GM12878 (cell line): ENCODE measurements at regions of chr13 and their contacts with region 1.

Region 1: DNA sequence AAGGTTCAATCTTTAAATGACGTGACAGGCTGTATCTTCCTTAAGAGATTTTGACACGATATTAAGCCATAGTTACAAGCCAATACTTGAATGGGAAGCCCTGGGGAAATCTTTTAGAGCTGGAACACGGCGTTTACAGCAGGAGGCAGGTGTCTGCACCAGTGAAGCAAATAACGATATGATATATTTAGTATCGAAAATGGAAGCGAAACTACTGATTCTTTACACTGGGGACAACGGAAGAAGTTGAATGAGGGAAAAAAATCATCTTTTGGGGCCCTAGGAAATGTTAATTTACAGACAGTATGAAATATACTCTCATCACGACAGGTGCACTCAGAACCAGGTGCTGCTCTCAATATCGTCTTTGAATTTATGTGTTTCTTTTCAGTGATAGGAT is 793.9 kb upstream of the PCDH20 start:
- DNase-seq: peak; percentile 65
- ATAC-seq: peak; percentile 92
- H3K4me3 ChIP-seq: peak overlapping the region; percentile 43
- H3K27ac ChIP-seq: peak overlapping the region; percentile 84
- H3K4me1 ChIP-seq: peaks cover 10% of the 10 kb centered on the region
- H3K27me3 ChIP-seq: no peaks in the 10 kb centered on the region
- CTCF ChIP-seq: no peak
- EP300 ChIP-seq: peak; percentile 62 to 68; a peak in 2 of 4 replicates
- POLR2A ChIP-seq: no peak
- RAD21 ChIP-seq: peak; percentile 36; the same call in 1 of the 2 replicates

Region 2: GRCh38 chr13:61672756-61673155 is 536.8 kb before region 1 on chr13:
- CTCF ChIA-PET with region 1: no interaction called
- POLR2A ChIA-PET with region 1: no interaction called
- RAD21 ChIA-PET with region 1: no interaction called
- SMC1A ChIA-PET with region 1: no interaction called
- in situ Hi-C with region 1: no loop called
- intact Hi-C with region 1: no loop called
- DNase-seq: no peak
- ATAC-seq: no peak
- H3K4me3 ChIP-seq: no peak overlapping the region
- H3K27ac ChIP-seq: no peak overlapping the region
- H3K4me1 ChIP-seq: no peaks in the 10 kb centered on the region
- H3K27me3 ChIP-seq: no peaks in the 10 kb centered on the region
- CTCF ChIP-seq: no peak
- EP300 ChIP-seq: no peak
- POLR2A ChIP-seq: no peak
- RAD21 ChIP-seq: no peak

Region 3: DNA sequence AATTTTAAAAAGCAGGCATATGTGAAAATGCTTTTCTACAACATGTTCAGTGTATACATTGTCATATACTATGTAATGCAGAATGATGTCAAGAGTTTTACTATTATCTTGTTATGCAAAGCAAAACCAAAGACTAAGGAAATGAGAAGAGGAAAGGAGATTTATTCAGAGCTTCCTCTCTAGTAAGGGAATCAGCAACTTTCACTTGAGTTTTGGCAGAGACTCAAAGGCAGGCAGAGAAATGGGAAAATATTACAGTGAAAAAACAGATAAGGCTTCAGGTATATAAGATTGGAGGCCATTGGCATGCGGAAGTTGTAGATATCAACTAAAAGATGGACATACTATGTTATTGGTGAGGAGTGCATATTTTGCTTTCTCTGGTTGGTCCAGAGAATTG is 281.9 kb before region 1 on chr13:
- CTCF ChIA-PET with region 1: no interaction called
- POLR2A ChIA-PET with region 1: no interaction called
- RAD21 ChIA-PET with region 1: no interaction called
- SMC1A ChIA-PET with region 1: no interaction called
- in situ Hi-C with region 1: no loop called
- intact Hi-C with region 1: no loop called
- DNase-seq: no peak
- ATAC-seq: no peak
- H3K4me3 ChIP-seq: no peak overlapping the region
- H3K27ac ChIP-seq: no peak overlapping the region
- H3K4me1 ChIP-seq: no peaks in the 10 kb centered on the region
- H3K27me3 ChIP-seq: no peaks in the 10 kb centered on the region
- CTCF ChIP-seq: no peak
- EP300 ChIP-seq: no peak
- POLR2A ChIP-seq: no peak
- RAD21 ChIP-seq: no peak

Region 4: GRCh38 chr13:62193919-62194318 is 15.6 kb before region 1 on chr13:
- CTCF ChIA-PET with region 1: interaction called, 3 read pairs
- POLR2A ChIA-PET with region 1: interaction called, 4 read pairs
- RAD21 ChIA-PET with region 1: interaction called, 4 read pairs
- SMC1A ChIA-PET with region 1: interaction called, 18 read pairs
- in situ Hi-C with region 1: no loop called
- intact Hi-C with region 1: no loop called
- DNase-seq: no peak
- ATAC-seq: no peak
- H3K4me3 ChIP-seq: no peak overlapping the region
- H3K27ac ChIP-seq: no peak overlapping the region
- H3K4me1 ChIP-seq: no peaks in the 10 kb centered on the region
- H3K27me3 ChIP-seq: no peaks in the 10 kb centered on the region
- CTCF ChIP-seq: no peak
- EP300 ChIP-seq: no peak
- POLR2A ChIP-seq: no peak
- RAD21 ChIP-seq: no peak

Region 5: GRCh38 chr13:62234780-62235440 is 25.4 kb after region 1 on chr13:
- CTCF ChIA-PET with region 1: interaction called, 5 read pairs
- POLR2A ChIA-PET with region 1: no interaction called
- RAD21 ChIA-PET with region 1: interaction called, 3 read pairs
- SMC1A ChIA-PET with region 1: interaction called, 23 read pairs
- in situ Hi-C with region 1: no loop called
- intact Hi-C with region 1: no loop called
- DNase-seq: no peak
- ATAC-seq: no peak
- H3K4me3 ChIP-seq: no peak overlapping the region
- H3K27ac ChIP-seq: no peak overlapping the region
- H3K4me1 ChIP-seq: no peaks in the 10 kb centered on the region
- H3K27me3 ChIP-seq: no peaks in the 10 kb centered on the region
- CTCF ChIP-seq: no peak
- EP300 ChIP-seq: no peak
- POLR2A ChIP-seq: no peak
- RAD21 ChIP-seq: no peak

Region 6: GRCh38 chr13:62305756-62306155 is 96.2 kb after region 1 on chr13:
- CTCF ChIA-PET with region 1: interaction called, 3 read pairs
- POLR2A ChIA-PET with region 1: no interaction called
- RAD21 ChIA-PET with region 1: interaction called, 3 read pairs
- SMC1A ChIA-PET with region 1: interaction called, 9 read pairs
- in situ Hi-C with region 1: no loop called
- intact Hi-C with region 1: loop called (anchors 5 kb)
- DNase-seq: peak; percentile 51
- ATAC-seq: peak; percentile 95
- H3K4me3 ChIP-seq: peak overlapping the region; percentile 13; the same call in 1 of the 2 replicates
- H3K27ac ChIP-seq: peak overlapping the region; percentile 69
- H3K4me1 ChIP-seq: peaks cover 12% of the 10 kb centered on the region
- H3K27me3 ChIP-seq: no peaks in the 10 kb centered on the region
- CTCF ChIP-seq: no peak
- EP300 ChIP-seq: no peak
- POLR2A ChIP-seq: no peak
- RAD21 ChIP-seq: 0 out of 2 replicates have a peak, but pooled peaks have one; percentile 9